Mammary epithelial cell (primary cell): ENCODE measurements at regions of chr15 and their contacts with region 1.

Region 1: DNA sequence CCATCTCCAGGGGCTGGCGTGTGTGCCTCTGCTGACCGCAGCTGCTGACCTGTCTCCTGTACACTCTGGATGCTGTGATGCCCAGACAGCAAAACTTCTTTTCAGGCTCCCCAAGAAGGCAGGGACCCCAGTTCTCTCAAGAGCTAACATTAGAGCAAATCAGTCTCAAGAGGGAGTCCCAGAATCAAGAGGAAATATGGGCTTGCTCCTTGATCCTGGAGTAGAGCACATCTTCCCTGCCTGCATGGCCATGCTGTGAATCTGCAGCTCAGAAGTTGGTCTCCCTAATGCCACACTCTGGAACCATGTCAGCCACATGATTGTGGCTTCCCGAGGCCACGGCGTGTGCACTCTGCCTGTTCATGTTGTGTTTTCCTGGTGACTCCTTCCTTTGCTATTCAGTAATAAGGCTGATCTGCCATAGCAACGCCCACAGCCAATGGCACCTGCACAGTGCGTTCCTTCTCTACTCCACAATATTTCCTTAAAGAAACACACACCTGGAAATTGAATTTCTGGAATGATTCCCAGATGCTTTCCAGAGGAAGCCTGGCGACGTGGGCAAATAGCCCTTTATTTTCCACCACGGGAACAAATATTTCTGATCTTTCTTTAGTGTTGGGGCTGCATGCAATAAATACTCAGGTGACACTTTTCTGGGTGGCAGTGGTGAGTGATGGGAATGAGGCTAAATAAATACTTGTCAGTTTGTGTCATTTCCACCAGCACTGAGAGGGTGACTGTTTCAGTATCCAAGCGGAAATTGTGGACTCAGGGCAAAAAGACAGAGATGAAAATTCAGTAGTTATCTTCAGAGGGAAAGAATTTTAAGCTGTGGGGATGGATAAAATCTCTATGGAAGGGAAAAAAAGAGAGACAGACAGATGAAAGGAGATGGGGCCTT is 21.9 kb upstream of the THSD4 start:
- DNase-seq: peak; percentile 93
- H3K4me3 ChIP-seq: no peak overlapping the region
- H3K27ac ChIP-seq: peak overlapping the region; percentile 72
- H3K4me1 ChIP-seq: peaks cover 38% of the 10 kb centered on the region
- H3K27me3 ChIP-seq: no peaks in the 10 kb centered on the region
- CTCF ChIP-seq: no peak

Region 2: DNA sequence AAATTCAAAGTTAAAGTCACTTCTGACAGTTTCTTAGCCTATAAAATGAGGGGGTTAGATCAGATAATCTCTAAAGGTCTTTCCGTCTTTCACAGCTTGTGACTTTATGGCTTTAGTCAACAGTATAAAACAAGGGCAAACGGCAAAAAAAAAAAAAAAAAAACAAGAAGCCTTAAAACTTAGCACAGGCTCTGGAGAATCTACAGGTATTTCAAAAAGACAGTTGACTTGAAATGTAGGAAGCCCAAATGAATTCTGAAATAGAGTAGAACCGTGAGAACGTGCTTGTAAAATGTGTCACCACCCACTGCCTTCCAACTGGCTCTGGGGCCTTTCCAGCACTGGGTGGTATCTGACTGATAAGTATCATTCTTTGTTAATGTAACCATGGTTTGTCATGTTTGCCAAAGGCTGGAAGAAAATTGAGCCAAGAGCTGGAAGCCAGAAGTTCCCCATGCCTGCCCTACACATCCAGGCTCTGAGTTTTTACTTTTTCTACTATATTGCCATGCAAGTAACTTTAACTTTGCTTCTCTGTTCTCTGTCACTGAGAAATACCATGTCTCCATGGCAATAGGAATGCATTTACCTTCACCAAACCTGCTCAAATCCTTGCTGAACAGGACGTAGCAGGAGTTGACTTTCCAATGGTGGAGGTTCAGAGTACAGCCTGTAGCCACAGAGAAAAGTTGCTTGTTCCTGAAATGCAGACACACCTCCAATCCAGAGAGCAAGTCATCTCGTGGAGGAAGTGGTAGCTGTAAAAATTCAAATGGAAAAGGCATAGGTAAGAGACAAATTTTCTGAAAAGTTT is 14.0 kb before region 1 on chr15:
- CTCF ChIA-PET with region 1: no interaction called
- dilution Hi-C with region 1: no loop called
- in situ Hi-C with region 1: no loop called
- intact Hi-C with region 1: loop called (anchors 1 kb)
- DNase-seq: peak; percentile 89
- H3K4me3 ChIP-seq: no peak overlapping the region
- H3K27ac ChIP-seq: peak overlapping the region; percentile 81
- H3K4me1 ChIP-seq: peaks cover 27% of the 10 kb centered on the region
- H3K27me3 ChIP-seq: no peaks in the 10 kb centered on the region
- CTCF ChIP-seq: no peak